Dorsolateral prefrontal cortex (tissue), 120 donors: ENCODE measurements at regions of chr6 and their contacts with region 1.

Region 1: GRCh38 chr6:96626759-96627364 is 63.9 kb downstream of the FHL5 start:
- DNase-seq: no peak
- H3K4me3 ChIP-seq: no peak overlapping the region
- H3K27ac ChIP-seq: no peak overlapping the region
- H3K27me3 ChIP-seq: no peaks in the 10 kb centered on the region
- CTCF ChIP-seq: peak; percentile 22 to 77 (median 56)

Region 2: GRCh38 chr6:95169775-95170174 is 1457.1 kb before region 1 on chr6:
- intact Hi-C with region 1: no loop called
- DNase-seq: no peak
- H3K4me3 ChIP-seq: no peak overlapping the region
- H3K27ac ChIP-seq: no peak overlapping the region
- H3K27me3 ChIP-seq: peaks cover 0 to 3% (median 0%) of the 10 kb centered on the region in 45 donors
- CTCF ChIP-seq: no peak

Region 3: GRCh38 chr6:95581073-95581472 is 1045.8 kb before region 1 on chr6:
- intact Hi-C with region 1: loop called in 1 of 2 experiments (anchors 10 kb)
- DNase-seq: no peak
- H3K4me3 ChIP-seq: no peak overlapping the region
- H3K27ac ChIP-seq: no peak overlapping the region
- H3K27me3 ChIP-seq: no peaks in the 10 kb centered on the region
- CTCF ChIP-seq: no peak

Region 4: GRCh38 chr6:96683819-96684528 is 57.1 kb after region 1 on chr6:
- intact Hi-C with region 1: no loop called
- DNase-seq: no peak
- H3K4me3 ChIP-seq: no peak overlapping the region
- H3K27ac ChIP-seq: no peak overlapping the region
- H3K27me3 ChIP-seq: no peaks in the 10 kb centered on the region
- CTCF ChIP-seq: no peak